ENCODE measurements at regions of chr14 and their contacts with region 1.

Region 1: GRCh38 chr14:24114536-24115450 is at the starts of genes DCAF11 and NRL:
- DNase-seq: peak; percentile 100
- H3K4me3 ChIP-seq: peak within 1 kb of the TSS; percentile 82
- H3K27ac ChIP-seq: peak within 1 kb of the TSS; percentile 99
- H3K4me1 ChIP-seq: peaks cover 14% of the 10 kb centered on the region
- H3K27me3 ChIP-seq: no peaks in the 10 kb centered on the region
- CTCF ChIP-seq: no peak
- total RNA-seq, gene DCAF11: 45.5 and 49.1 TPM in 2 replicates
- total RNA-seq, gene NRL: 1.6 and 1.9 TPM in 2 replicates

Region 2: DNA sequence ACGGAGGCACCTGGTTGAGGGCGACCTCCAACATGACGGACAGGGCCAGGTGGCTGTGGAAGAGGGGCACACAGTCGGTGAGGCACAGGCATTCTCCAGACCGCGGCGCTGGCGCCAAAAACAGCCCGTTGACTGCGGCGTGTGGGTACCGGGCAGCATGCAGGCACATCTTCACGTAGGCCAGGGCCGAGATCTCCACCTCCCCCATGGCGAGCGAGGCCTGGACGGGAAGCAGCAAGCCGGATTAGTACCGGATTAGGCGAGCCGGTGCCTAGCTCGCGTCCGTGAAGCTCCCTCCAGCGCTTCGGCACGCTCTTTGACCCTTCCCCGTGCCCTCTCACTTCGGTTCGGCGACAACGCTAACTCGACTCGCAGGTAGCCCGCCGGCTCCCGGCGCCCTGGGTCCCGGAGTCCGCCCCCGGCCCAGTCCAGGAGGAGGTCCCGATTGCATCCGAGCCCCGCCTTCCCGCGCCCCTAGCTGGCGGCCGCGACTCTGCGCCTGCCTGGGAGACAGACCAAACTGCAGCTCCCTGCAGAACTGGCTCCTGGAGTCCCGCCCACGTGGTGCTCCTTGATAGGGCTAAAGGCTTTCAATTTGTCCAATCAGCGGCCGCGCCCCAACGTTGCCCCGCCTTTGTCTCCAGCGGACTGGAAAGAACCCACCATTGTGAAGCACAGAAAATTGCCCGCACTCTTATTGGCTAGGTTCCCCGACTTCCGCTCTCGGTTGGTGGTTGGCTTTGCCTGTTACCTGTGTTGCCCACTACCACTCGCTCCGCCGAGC is 26.5 kb after region 1 on chr14 and contains the start of gene EMC9:
- CTCF ChIA-PET with region 1: no interaction called
- POLR2A ChIA-PET with region 1: interaction called, 4 read pairs
- intact Hi-C with region 1: loop called (anchors 2 kb)
- DNase-seq: peak; percentile 100
- H3K4me3 ChIP-seq: peak within 1 kb of the TSS; percentile 74
- H3K27ac ChIP-seq: peak within 1 kb of the TSS; percentile 80
- H3K4me1 ChIP-seq: peaks cover 20% of the 10 kb centered on the region
- H3K27me3 ChIP-seq: no peaks in the 10 kb centered on the region
- CTCF ChIP-seq: peak; percentile 42; the same call in 1 of the 2 replicates
- total RNA-seq, gene EMC9: 36.8 and 50.4 TPM in 2 replicates

Region 3: DNA sequence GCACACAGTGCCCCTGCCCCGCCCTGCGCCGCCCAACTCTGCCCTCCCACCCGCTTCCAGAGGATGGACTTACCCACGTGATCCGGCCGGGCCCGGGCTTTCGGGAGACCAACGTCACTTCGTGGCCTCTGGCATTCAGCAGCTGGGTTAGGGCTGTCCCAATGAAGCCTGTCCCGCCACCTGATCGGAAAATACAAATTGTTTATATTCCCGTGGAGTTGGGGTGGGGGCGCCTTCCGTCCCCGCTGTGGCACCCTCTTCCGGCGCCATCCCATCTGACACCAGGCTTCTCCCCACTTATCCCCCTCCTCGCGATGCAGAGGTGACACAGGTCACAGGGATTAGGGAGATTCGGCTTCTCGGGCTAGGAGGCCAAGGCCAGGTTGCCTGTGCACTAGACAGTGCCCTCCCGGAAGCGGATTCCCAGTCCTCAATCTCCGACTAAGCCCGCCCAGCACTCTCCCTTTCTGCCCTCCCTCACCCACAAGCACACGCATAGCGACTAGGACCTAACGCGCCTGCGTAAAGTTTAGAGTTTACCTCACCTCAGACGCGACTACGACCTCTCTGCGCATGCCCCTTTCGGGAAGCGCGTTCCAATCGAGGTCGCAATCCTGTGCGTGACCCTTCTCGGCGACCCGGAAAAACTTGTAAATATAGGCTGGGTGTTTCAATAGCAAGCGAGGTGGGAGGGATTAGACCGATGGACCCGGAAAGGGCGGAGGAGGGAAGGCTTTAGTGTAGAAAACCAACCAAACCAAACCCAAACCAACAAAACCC is 327.7 kb after region 1 on chr14 and contains the start of gene SDR39U1:
- CTCF ChIA-PET with region 1: no interaction called
- POLR2A ChIA-PET with region 1: no interaction called
- intact Hi-C with region 1: no loop called
- DNase-seq: peak; percentile 99
- H3K4me3 ChIP-seq: peak within 1 kb of the TSS; percentile 76
- H3K27ac ChIP-seq: peak within 1 kb of the TSS; percentile 97
- H3K4me1 ChIP-seq: peaks cover 11% of the 10 kb centered on the region
- H3K27me3 ChIP-seq: no peaks in the 10 kb centered on the region
- CTCF ChIP-seq: 0 out of 2 replicates have a peak, but pooled peaks have one; percentile 9
- total RNA-seq, gene SDR39U1: 49.1 and 52.1 TPM in 2 replicates